Colonic mucosa (tissue), 4 donors: ENCODE measurements at regions of chr2 and their contacts with region 1.

Region 1: DNA sequence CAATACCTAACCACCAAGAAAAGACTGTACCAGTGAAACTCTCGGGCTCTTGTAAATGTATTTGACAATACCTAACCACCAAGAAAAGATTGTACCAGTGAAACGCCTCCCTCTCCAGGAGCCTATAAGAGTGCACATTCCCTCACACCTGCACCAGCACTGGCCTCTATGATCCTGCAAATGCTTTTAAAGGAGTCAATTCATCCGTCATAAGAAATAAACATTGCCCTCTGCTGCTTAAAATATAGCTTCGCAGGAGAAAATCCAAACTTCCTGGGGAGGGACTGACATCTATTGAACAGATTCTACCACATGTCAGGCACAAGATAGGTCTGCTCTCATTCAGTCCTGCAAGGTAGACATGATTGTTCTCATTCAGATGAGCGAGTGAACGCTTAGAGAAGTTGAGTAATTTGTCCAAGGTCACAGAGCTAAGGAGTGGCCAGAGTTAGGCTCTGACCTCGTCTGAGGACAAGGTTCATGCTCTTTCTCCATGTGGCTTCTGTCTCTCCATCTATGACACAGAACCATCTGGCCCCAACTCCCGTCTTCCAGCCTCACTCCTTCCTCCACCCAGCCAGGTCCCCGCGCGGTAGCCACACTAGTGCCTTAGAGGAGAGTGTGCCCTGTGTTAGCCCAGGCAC is 38.7 kb downstream of the MCFD2 start:
- DNase-seq: peak; percentile 46
- H3K4me3 ChIP-seq: no peak overlapping the region
- H3K27ac ChIP-seq: no peak overlapping the region
- H3K4me1 ChIP-seq: no peaks in the 10 kb centered on the region
- H3K27me3 ChIP-seq: no peaks in the 10 kb centered on the region
- CTCF ChIP-seq: peak; percentile 44

Region 2: DNA sequence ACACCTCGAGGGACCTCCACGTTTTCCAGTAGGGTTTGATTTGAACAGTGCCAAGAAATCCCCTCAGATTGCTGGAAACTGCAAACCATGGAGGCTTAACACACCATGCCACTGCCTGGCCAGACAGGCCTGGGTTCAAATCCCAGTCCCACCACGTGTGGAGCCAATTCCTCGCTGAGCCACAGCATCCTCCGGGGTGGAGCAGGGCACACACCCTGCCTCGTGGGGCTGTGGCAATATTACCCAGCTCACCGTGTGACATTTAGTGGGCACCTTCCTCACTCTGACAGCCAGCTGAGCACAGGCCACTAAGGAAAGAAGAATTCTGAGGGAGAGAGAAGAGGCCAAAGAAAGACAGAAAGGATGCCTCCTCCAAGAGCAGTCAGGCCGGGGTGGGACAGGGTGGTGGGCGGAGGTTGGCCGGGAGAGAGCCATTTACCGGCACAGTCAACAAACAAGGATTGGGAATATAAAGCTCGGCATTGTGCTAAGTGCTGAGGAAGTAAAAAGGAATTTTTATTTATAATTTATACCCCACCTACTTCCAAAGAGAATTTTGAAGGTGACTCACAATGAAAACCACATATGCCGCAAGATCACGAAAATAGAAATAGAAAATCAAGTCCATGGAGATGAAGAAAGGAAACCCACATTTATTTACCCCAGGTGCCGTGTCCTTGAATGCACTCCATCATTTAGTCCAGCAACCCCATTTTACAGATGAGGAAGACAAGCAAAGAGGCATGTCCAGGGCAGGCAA is 72.8 kb before region 1 on chr2:
- intact Hi-C with region 1: loop called (anchors 5 kb)
- DNase-seq: peak; percentile 18
- H3K4me3 ChIP-seq: no peak overlapping the region
- H3K27ac ChIP-seq: no peak overlapping the region
- H3K4me1 ChIP-seq: no peaks in the 10 kb centered on the region
- H3K27me3 ChIP-seq: no peaks in the 10 kb centered on the region
- CTCF ChIP-seq: no peak

Region 3: DNA sequence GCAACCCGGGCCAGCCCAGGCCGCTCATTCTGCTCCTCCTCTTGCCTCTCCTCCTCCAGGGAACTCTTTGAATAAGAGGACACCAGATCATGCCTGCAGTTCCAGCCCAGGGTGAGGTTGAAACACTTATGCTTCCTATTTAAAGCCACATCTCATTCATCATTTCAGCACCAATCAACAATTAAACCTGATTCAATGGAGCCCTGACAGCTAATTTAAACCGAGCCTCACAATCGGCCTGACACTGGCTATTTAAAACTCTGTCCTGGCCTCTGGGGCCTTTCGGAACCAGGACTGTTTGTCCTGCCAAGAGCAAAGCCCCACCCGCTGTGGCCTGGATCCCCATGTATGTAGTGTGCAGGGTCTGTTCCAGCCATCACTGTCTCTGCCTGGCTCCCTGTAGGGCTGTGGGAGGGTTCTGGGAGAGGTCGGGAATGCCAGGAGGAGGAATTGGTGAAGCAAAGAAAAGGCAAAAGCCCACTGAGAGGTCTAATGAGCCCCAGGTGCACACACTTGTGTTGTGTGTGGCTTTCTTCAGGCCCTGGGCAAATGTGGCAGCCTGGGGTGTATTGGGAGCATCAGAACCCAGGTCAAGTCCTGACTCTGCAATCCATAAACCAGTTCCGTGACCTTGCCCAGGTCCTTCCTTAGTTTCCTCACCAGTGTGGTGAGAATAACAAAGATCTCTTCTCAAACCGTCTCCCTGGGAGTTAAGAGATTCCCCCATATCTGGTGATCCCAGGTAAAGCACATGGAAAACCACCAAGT is 58.6 kb before region 1 on chr2:
- intact Hi-C with region 1: no loop called
- DNase-seq: peak; percentile 43
- H3K4me3 ChIP-seq: no peak overlapping the region
- H3K27ac ChIP-seq: no peak overlapping the region
- H3K4me1 ChIP-seq: no peaks in the 10 kb centered on the region
- H3K27me3 ChIP-seq: no peaks in the 10 kb centered on the region
- CTCF ChIP-seq: no peak

Region 4: GRCh38 chr2:46836295-46837111 is 40.4 kb before region 1 on chr2:
- intact Hi-C with region 1: no loop called
- DNase-seq: no peak
- H3K4me3 ChIP-seq: no peak overlapping the region
- H3K27ac ChIP-seq: no peak overlapping the region
- H3K4me1 ChIP-seq: no peaks in the 10 kb centered on the region
- H3K27me3 ChIP-seq: no peaks in the 10 kb centered on the region
- CTCF ChIP-seq: no peak

Region 5: GRCh38 chr2:46942139-46942517 is 65.3 kb after region 1 on chr2:
- intact Hi-C with region 1: no loop called
- DNase-seq: peak; percentile 68
- H3K4me3 ChIP-seq: peak overlapping the region; percentile 80
- H3K27ac ChIP-seq: peak overlapping the region; percentile 94
- H3K4me1 ChIP-seq: no peaks in the 10 kb centered on the region
- H3K27me3 ChIP-seq: no peaks in the 10 kb centered on the region
- CTCF ChIP-seq: no peak